Activated naive CD4-positive, alpha-beta T cell treated with anti-CD3 and anti-CD28 coated beads for 36 hours (primary cell): ENCODE measurements at regions of chrX and their contacts with region 1.

Region 1: GRCh38 chrX:85851418-85851817 is 195.9 kb downstream of the CHM start:
- DNase-seq: peak; percentile 25
- H3K4me3 Mint-ChIP-seq: no peak overlapping the region
- H3K27ac Mint-ChIP-seq: no peak overlapping the region
- H3K4me1 Mint-ChIP-seq: no peaks in the 10 kb centered on the region
- H3K27me3 Mint-ChIP-seq: peaks cover 1% of the 10 kb centered on the region

Region 2: GRCh38 chrX:85828771-85829170 is 22.6 kb before region 1 on chrX:
- CTCF ChIA-PET with region 1: no interaction called
- intact Hi-C with region 1: no loop called
- DNase-seq: no peak
- H3K4me3 Mint-ChIP-seq: no peak overlapping the region
- H3K27ac Mint-ChIP-seq: no peak overlapping the region
- H3K4me1 Mint-ChIP-seq: no peaks in the 10 kb centered on the region
- H3K27me3 Mint-ChIP-seq: no peaks in the 10 kb centered on the region

Region 3: GRCh38 chrX:86066997-86067396 is 215.6 kb after region 1 on chrX:
- CTCF ChIA-PET with region 1: no interaction called
- intact Hi-C with region 1: loop called (anchors 10 kb)
- DNase-seq: no peak
- H3K4me3 Mint-ChIP-seq: no peak overlapping the region
- H3K27ac Mint-ChIP-seq: no peak overlapping the region
- H3K4me1 Mint-ChIP-seq: no peaks in the 10 kb centered on the region
- H3K27me3 Mint-ChIP-seq: no peaks in the 10 kb centered on the region

Region 4: DNA sequence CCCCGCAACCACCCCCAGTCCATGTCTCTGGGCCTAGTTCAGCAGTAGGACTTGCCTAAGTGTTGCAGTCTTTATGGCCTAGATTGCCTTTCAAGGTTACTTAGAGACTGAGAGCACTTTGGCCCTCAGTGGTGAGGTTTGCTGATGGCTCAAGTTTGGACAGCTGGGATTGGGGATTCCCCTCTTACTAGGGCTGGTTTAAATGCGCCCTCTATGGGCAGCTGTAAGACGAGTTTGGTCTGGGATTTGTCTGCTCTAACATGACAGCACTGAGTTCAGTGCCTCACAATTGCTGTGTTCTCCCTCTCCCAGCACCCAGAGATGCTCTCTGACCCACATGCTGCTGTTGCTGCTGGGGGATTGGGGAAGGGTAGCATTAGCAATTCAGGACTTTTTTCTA is 319.9 kb after region 1 on chrX:
- CTCF ChIA-PET with region 1: no interaction called
- intact Hi-C with region 1: loop called (anchors 2 kb)
- DNase-seq: no peak
- H3K4me3 Mint-ChIP-seq: no peak overlapping the region
- H3K27ac Mint-ChIP-seq: no peak overlapping the region
- H3K4me1 Mint-ChIP-seq: no peaks in the 10 kb centered on the region
- H3K27me3 Mint-ChIP-seq: peaks cover 10% of the 10 kb centered on the region